OCI-LY7 (cell line): ENCODE measurements at regions of chr7 and their contacts with region 1.

Region 1: GRCh38 chr7:145957160-145957890 is 159.3 kb upstream of the CNTNAP2 start:
- DNase-seq: peak; percentile 88
- H3K4me3 ChIP-seq: peak overlapping the region; percentile 47
- H3K27ac ChIP-seq: peak overlapping the region; percentile 100
- H3K4me1 ChIP-seq: peaks cover 44% of the 10 kb centered on the region
- CTCF ChIP-seq: no peak

Region 2: GRCh38 chr7:146002431-146003078 is 45.2 kb after region 1 on chr7:
- CTCF ChIA-PET with region 1: interaction called, 6 read pairs
- POLR2A ChIA-PET with region 1: interaction called, 12 read pairs
- intact Hi-C with region 1: loop called (anchors 1 kb)
- DNase-seq: peak; percentile 95
- H3K4me3 ChIP-seq: peak overlapping the region; percentile 24
- H3K27ac ChIP-seq: peak overlapping the region; percentile 92
- H3K4me1 ChIP-seq: peaks cover 81% of the 10 kb centered on the region
- CTCF ChIP-seq: no peak